B cell (primary cell): ENCODE measurements at regions of chr12 and their contacts with region 1.

Region 1: DNA sequence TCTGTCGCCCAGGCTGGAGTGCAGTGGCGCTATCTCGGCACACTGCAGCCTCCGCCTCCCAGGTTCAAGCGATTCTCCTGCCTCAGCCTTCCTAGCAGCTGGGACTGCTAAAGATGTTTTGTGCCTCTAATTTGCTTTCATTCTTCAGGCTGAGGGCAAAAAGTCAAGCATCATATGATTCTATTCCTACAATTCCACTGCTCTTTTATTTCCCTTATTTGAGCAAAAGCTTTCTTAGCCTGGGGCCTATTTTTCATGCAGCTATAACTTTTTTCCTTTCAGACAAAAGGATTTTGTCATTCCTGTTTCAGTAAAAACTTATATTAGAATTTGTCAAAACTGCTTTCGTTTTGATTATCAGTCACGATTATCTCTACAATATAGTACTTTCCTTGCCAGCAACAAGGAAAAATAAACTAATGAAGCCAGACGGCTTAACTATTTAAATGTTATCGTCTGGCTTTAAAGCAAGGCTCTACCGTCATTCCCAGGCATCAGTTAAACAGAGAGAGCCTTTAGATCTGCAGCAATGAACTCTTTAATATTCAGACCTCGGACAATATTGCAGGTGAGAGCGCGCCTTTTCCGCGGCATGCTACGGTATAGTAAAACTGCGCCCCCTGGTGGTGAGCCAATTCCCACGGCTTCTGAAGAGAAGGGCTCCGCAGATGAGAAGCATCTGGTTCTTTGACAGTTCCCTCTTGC is 1.4 kb upstream of the SLC2A13 start:
- DNase-seq: peak; percentile 90
- ATAC-seq: peak; percentile 42
- H3K4me3 ChIP-seq: peak overlapping the region in 4 of 5 experiments; percentile 39 to 83 (median 58)
- H3K4me3 Mint-ChIP-seq: peak overlapping the region; percentile 81
- H3K27ac ChIP-seq: peak overlapping the region in 1 of 2 donors; percentile 17
- H3K27ac Mint-ChIP-seq: peak overlapping the region; percentile 7
- H3K4me1 ChIP-seq: peaks cover 10 to 30% of the 10 kb centered on the region in 2 donors
- H3K4me1 Mint-ChIP-seq: peaks cover 29% of the 10 kb centered on the region
- H3K27me3 ChIP-seq: no peaks in the 10 kb centered on the region
- H3K27me3 Mint-ChIP-seq: no peaks in the 10 kb centered on the region
- CTCF ChIP-seq: peak; percentile 94

Region 2: GRCh38 chr12:39587225-39587624 is 520.0 kb before region 1 on chr12:
- CTCF ChIA-PET with region 1: interaction called, 3 read pairs
- POLR2A ChIA-PET with region 1: no interaction called
- intact Hi-C with region 1: loop called (anchors 10 kb)
- DNase-seq: peak; percentile 41
- ATAC-seq: no peak
- H3K4me3 ChIP-seq: no peak overlapping the region
- H3K4me3 Mint-ChIP-seq: no peak overlapping the region
- H3K27ac ChIP-seq: no peak overlapping the region
- H3K27ac Mint-ChIP-seq: no peak overlapping the region
- H3K4me1 ChIP-seq: no peaks in the 10 kb centered on the region
- H3K4me1 Mint-ChIP-seq: peaks cover 2% of the 10 kb centered on the region
- H3K27me3 ChIP-seq: no peaks in the 10 kb centered on the region
- H3K27me3 Mint-ChIP-seq: no peaks in the 10 kb centered on the region
- CTCF ChIP-seq: peak; percentile 58

Region 3: DNA sequence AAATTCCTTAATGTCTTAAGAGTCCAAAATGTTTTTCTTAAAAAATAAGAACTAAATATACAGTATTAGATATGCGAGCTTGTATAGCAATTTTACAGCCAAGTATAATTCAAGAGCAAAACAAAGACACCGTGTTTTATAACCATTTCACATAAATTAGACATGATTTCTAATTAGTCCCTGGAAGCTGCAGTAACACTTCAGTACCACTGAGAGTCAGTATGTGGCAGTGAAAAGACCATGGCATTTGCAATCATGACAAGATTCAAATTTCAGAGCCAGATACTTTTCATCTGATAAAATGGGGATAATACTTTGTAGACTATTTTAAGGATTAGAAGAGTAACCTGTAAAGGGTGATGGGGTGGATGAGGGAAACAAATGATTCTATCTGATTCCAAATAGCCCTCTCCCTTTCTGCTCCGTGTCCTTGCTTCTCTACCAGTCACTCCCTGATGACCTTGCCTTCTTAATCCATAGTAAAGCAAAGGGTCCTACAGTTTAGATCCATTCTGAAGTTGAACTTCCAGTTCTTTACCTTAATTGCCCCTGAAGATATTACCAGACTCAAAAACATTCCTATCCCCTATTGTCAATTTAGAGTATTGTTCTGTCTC is 342.2 kb before region 1 on chr12:
- CTCF ChIA-PET with region 1: no interaction called
- POLR2A ChIA-PET with region 1: no interaction called
- intact Hi-C with region 1: loop called (anchors 2 kb)
- DNase-seq: peak; percentile 32
- ATAC-seq: peak; percentile 45
- H3K4me3 ChIP-seq: no peak overlapping the region
- H3K4me3 Mint-ChIP-seq: no peak overlapping the region
- H3K27ac ChIP-seq: no peak overlapping the region
- H3K27ac Mint-ChIP-seq: no peak overlapping the region
- H3K4me1 ChIP-seq: no peaks in the 10 kb centered on the region
- H3K4me1 Mint-ChIP-seq: no peaks in the 10 kb centered on the region
- H3K27me3 ChIP-seq: no peaks in the 10 kb centered on the region
- H3K27me3 Mint-ChIP-seq: no peaks in the 10 kb centered on the region
- CTCF ChIP-seq: peak; percentile 80

Region 4: GRCh38 chr12:40117818-40118217 is 10.6 kb after region 1 on chr12:
- CTCF ChIA-PET with region 1: interaction called, 14 read pairs
- POLR2A ChIA-PET with region 1: interaction called, 4 read pairs
- intact Hi-C with region 1: no loop called
- DNase-seq: no peak
- ATAC-seq: no peak
- H3K4me3 ChIP-seq: no peak overlapping the region
- H3K4me3 Mint-ChIP-seq: no peak overlapping the region
- H3K27ac ChIP-seq: no peak overlapping the region
- H3K27ac Mint-ChIP-seq: no peak overlapping the region
- H3K4me1 ChIP-seq: no peaks in the 10 kb centered on the region
- H3K4me1 Mint-ChIP-seq: peaks cover 3% of the 10 kb centered on the region
- H3K27me3 ChIP-seq: no peaks in the 10 kb centered on the region
- H3K27me3 Mint-ChIP-seq: no peaks in the 10 kb centered on the region
- CTCF ChIP-seq: no peak

Region 5: DNA sequence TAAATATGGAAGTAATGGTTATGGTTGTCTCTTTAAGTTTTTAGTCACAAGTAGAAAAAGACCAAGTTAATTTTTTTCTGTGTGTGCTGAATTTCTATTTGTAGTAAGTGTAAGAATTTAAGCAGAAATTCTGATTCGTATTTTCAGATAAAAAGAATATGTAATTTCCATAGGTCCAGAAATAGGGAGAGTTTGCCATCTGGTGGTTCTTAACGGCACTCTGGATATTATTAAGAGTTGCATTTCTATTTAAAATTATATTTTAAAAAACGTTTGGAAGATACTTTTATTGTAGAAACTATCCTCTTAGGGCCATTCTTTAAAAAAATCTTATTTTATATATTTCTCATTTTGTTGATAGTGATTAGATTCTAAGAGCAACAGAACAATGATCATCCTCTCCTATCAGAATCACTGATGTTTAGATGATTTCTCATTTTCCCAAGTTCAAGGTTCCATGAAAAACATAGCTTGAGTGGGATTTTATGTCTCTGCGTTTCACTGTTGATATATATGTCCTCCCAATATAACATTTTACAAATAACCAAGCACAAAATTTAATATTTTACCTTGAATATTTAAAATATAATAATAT is 205.8 kb after region 1 on chr12:
- CTCF ChIA-PET with region 1: interaction called, 17 read pairs
- POLR2A ChIA-PET with region 1: no interaction called
- intact Hi-C with region 1: loop called (anchors 2 kb)
- DNase-seq: peak; percentile 51
- ATAC-seq: no peak
- H3K4me3 ChIP-seq: no peak overlapping the region
- H3K4me3 Mint-ChIP-seq: no peak overlapping the region
- H3K27ac ChIP-seq: peak overlapping the region in 1 of 2 donors; percentile 13
- H3K27ac Mint-ChIP-seq: no peak overlapping the region
- H3K4me1 ChIP-seq: peaks cover 13 to 15% of the 10 kb centered on the region in 2 donors
- H3K4me1 Mint-ChIP-seq: peaks cover 26% of the 10 kb centered on the region
- H3K27me3 ChIP-seq: no peaks in the 10 kb centered on the region
- H3K27me3 Mint-ChIP-seq: no peaks in the 10 kb centered on the region
- CTCF ChIP-seq: peak; percentile 78

Region 6: GRCh38 chr12:40946612-40947194 is 839.5 kb after region 1 on chr12:
- CTCF ChIA-PET with region 1: no interaction called
- POLR2A ChIA-PET with region 1: no interaction called
- intact Hi-C with region 1: no loop called
- DNase-seq: peak; percentile 38
- ATAC-seq: no peak
- H3K4me3 ChIP-seq: no peak overlapping the region
- H3K4me3 Mint-ChIP-seq: no peak overlapping the region
- H3K27ac ChIP-seq: no peak overlapping the region
- H3K27ac Mint-ChIP-seq: no peak overlapping the region
- H3K4me1 ChIP-seq: no peaks in the 10 kb centered on the region
- H3K4me1 Mint-ChIP-seq: no peaks in the 10 kb centered on the region
- H3K27me3 ChIP-seq: peaks cover 0 to 3% (median 0%) of the 10 kb centered on the region in 4 experiments
- H3K27me3 Mint-ChIP-seq: peaks cover 9% of the 10 kb centered on the region
- CTCF ChIP-seq: peak; percentile 88